OCI-LY7 (cell line): ENCODE measurements at regions of chr4 and their contacts with region 1.

Region 1: DNA sequence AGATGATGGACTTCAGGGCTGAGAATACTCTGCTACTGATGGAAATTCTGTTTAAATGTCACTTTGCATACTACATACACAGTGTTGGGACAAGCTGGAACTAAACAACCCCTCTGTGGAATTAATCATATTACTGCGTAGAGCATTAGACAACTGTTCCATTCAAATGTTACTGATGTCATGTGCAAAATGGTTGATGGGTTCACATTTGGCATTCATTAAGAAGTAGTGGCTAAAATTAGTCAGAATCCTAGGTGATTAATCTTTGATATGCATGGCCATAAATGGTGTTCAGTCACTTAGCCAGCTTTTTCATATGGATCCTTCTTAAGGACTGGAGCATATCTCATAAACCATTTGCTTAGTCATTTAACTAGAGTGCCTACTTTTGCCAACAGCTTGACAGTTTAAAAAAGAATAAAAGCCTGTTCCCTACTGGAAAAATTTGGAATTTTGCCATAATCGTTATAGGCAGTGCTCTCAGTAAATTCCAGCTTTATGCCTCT is 105.2 kb downstream of the RNF150 start:
- DNase-seq: no peak
- H3K4me3 ChIP-seq: no peak overlapping the region
- H3K27ac ChIP-seq: no peak overlapping the region
- H3K4me1 ChIP-seq: no peaks in the 10 kb centered on the region
- CTCF ChIP-seq: no peak

Region 2: DNA sequence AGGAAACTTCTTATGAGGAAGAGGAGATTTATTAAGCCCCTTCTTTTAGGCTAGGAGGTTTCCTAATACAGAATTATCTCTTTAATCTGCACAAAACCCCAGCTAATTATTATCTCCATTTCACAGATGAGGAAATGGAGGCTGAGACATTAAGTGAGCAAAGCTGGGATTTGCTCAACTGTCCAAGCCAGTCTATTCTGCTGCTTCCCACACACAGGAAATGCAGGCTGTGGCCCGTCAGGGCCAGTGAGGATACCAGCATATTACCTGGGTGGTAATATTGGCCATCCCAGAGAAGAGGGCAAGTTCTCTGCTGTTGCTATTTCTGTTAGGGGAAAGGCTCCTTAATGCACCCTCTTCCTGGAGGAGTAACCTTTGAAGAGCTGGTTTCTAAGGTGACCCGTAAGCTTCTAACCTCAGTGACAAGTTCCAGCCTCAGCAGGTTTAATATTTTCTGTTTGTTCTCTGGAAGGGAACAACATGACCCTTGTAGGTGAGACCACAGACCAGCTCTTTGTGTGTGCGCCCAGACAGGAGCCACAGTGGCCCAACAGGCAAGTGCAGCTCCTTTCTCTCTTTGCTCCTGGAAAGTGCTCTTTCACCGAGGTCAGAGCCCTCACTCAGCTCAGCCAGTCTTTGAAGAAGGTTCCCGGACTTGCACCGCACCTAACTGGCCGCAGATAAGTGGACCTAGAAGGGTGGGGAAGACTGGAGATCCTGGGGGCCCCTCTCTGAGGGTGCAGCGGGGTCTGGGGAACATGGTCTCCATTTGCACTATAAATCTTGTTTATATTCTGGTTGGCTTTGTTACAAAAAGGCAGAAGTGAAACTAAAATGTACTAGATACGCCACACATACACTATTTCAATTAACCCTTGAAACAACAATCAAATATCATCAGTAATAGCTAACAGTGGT is 307.4 kb before region 1 on chr4:
- CTCF ChIA-PET with region 1: no interaction called
- POLR2A ChIA-PET with region 1: no interaction called
- intact Hi-C with region 1: no loop called
- DNase-seq: peak; percentile 76
- H3K4me3 ChIP-seq: peak overlapping the region; percentile 65
- H3K27ac ChIP-seq: peak overlapping the region; percentile 70
- H3K4me1 ChIP-seq: peaks cover 57% of the 10 kb centered on the region
- CTCF ChIP-seq: no peak

Region 3: DNA sequence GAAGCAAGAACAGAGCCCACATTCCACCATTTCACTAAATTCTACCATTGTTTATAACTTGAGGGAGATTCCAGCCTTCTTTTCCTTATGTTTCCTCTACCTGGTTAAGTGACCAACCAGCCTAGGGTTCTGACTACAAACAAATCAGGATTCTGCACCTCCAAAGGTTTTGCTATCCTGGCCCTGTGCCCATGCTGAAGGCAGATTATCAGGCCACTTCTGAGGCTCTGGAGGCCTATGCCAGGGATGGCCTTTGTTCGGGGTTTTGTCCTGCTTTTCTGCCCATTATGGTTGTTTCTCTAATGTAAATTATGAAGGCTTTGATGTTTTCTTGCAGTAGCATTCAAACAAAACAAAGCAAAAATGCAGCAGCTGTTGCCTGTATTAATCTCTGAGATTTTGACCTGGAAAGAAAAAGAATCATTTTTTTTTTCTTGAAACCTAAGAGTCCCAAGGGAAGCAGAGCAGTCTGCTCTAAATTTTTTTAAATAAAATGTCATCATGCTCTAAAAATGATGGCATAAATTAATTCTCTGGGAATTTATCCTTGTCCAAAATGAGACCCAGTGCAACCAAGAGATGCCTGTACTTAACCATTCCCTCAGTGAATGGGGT is 49.6 kb after region 1 on chr4:
- CTCF ChIA-PET with region 1: no interaction called
- POLR2A ChIA-PET with region 1: no interaction called
- intact Hi-C with region 1: loop called (anchors 2 kb)
- DNase-seq: no peak
- H3K4me3 ChIP-seq: no peak overlapping the region
- H3K27ac ChIP-seq: no peak overlapping the region
- H3K4me1 ChIP-seq: no peaks in the 10 kb centered on the region
- CTCF ChIP-seq: no peak

Region 4: GRCh38 chr4:141102367-141102766 is 74.3 kb after region 1 on chr4:
- CTCF ChIA-PET with region 1: no interaction called
- POLR2A ChIA-PET with region 1: no interaction called
- intact Hi-C with region 1: no loop called
- DNase-seq: no peak
- H3K4me3 ChIP-seq: no peak overlapping the region
- H3K27ac ChIP-seq: no peak overlapping the region
- H3K4me1 ChIP-seq: no peaks in the 10 kb centered on the region
- CTCF ChIP-seq: no peak

Region 5: GRCh38 chr4:142160509-142160908 is 1132.4 kb after region 1 on chr4:
- CTCF ChIA-PET with region 1: no interaction called
- POLR2A ChIA-PET with region 1: no interaction called
- intact Hi-C with region 1: no loop called
- DNase-seq: no peak
- H3K4me3 ChIP-seq: no peak overlapping the region
- H3K27ac ChIP-seq: no peak overlapping the region
- H3K4me1 ChIP-seq: no peaks in the 10 kb centered on the region
- CTCF ChIP-seq: no peak